ENCODE measurements at regions of chr7 and their contacts with region 1.

Region 1: GRCh38 chr7:26556071-26556881 is 264.6 kb downstream of the SNX10 start:
- DNase-seq: peak; percentile 39
- H3K4me3 ChIP-seq: no peak overlapping the region
- H3K27ac ChIP-seq: no peak overlapping the region
- H3K4me1 ChIP-seq: peaks cover 0 to 10% of the 10 kb centered on the region in 2 experiments; a peak in 1 of 4 replicates
- H3K27me3 ChIP-seq: no peaks in the 10 kb centered on the region
- CTCF ChIP-seq: no peak
- EP300 ChIP-seq: no peak
- RAD21 ChIP-seq: no peak

Region 2: DNA sequence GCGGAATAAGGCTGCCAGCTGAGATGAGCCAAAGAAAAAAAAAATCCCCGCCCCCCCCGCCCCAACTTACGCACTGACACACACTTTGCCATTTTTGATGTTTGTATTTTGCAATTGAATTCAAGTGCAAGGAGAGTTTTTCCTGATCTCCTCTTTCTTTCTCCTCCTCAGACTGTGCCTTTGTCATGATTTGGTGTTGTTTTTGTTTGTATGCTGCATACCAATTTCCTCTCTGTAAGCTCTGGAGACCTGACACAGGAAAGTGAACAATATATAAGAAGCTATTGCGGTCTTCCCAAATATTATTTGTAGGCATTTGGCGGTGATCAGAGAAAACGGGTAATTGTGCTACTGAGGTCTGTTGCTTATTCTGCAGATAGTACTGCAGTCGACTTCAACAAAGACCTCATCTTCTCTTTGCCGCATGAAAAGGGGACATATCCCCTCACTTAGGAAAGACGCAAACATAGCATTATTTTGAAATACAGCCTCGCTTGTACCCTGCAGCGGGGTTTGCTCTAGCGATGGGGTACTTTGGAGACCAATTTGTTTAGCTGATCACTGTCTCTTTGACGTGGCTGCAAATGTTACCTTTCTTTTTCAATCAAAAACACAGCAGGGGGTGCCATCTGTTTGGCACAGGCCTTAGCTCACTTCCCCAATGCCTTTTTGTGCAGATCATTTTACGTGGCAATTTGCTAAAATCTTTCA is 101.6 kb after region 1 on chr7:
- CTCF ChIA-PET with region 1: interaction called, 14 read pairs
- POLR2A ChIA-PET with region 1: no interaction called
- DNase-seq: no peak
- H3K4me3 ChIP-seq: no peak overlapping the region
- H3K27ac ChIP-seq: no peak overlapping the region
- H3K4me1 ChIP-seq: peaks cover 0 to 6% of the 10 kb centered on the region in 2 experiments; a peak in 1 of 4 replicates
- H3K27me3 ChIP-seq: no peaks in the 10 kb centered on the region; the same call in 1 of the 2 replicates
- CTCF ChIP-seq: no peak
- EP300 ChIP-seq: no peak
- RAD21 ChIP-seq: no peak

Measured in SK-N-SH (cell line).